Heart left ventricle (tissue), 16 donors: ENCODE measurements at regions of chr9 and their contacts with region 1.

Region 1: DNA sequence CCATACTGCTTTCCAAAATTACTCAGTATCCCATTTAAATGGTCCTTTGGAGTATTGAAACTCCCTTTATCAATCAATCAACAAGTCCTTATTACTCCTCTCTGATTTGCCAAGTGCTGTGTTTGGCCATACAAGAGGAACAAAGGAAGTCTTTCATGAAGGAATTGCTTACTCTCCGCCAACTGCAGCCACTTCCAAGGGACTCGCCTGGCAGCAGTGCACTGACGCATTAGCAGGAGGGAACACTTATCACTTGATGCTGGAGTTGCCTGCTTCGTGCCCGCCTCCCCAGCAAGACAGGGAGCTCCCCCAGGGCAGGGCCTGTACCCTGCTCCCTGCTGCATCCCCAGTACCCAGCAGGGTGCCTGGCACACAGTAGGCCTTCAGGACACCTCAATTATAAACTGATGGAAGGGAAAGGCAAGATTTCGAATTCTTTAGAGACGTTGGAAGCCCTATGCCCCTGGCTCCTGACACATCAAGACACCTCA is 97.9 kb downstream of the CRB2 start:
- DNase-seq: peak in 3 of 5 donors; percentile 35 to 70 (median 38)
- ATAC-seq: peak; percentile 19 to 77 (median 59)
- H3K4me3 ChIP-seq: no peak overlapping the region
- H3K27ac ChIP-seq: no peak overlapping the region
- H3K4me1 ChIP-seq: no peaks in the 10 kb centered on the region
- H3K27me3 ChIP-seq: no peaks in the 10 kb centered on the region
- CTCF ChIP-seq: no peak
- POLR2A ChIP-seq: no peak

Region 2: GRCh38 chr9:123360161-123361085 is 93.5 kb before region 1 on chr9:
- intact Hi-C with region 1: no loop called
- DNase-seq: no peak
- ATAC-seq: no peak
- H3K4me3 ChIP-seq: no peak overlapping the region
- H3K27ac ChIP-seq: no peak overlapping the region
- H3K4me1 ChIP-seq: no peaks in the 10 kb centered on the region
- H3K27me3 ChIP-seq: peaks cover 0 to 12% (median 0%) of the 10 kb centered on the region in 9 donors
- CTCF ChIP-seq: no peak
- POLR2A ChIP-seq: no peak

Region 3: DNA sequence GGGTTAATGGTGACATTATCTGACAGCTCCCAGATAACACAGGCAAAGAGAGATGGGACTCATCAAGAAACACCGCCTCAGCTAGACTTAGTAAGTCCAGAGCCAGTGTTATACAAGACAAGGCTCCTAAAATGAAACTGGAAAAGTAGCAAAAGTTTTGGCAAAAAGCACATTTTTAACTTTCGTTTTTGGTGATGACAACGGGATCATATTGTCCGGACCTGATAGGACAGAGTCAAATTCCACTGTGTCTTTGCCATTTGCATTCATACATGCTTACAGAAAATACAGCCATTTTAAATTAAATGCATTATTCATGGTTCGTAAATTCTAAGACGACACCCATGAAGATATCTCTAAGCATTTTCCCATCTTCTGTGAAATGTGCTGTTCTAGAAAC is 54.2 kb after region 1 on chr9:
- intact Hi-C with region 1: loop called in 1 of 10 experiments (anchors 10 kb)
- DNase-seq: no peak
- ATAC-seq: peak in 2 of 4 donors; percentile 21 to 28
- H3K4me3 ChIP-seq: peak overlapping the region in 8 of 12 donors; percentile 5 to 43 (median 29)
- H3K27ac ChIP-seq: no peak overlapping the region
- H3K4me1 ChIP-seq: peaks cover 0 to 20% (median 0%) of the 10 kb centered on the region in 12 donors
- H3K27me3 ChIP-seq: no peaks in the 10 kb centered on the region
- CTCF ChIP-seq: no peak
- POLR2A ChIP-seq: no peak

Region 4: DNA sequence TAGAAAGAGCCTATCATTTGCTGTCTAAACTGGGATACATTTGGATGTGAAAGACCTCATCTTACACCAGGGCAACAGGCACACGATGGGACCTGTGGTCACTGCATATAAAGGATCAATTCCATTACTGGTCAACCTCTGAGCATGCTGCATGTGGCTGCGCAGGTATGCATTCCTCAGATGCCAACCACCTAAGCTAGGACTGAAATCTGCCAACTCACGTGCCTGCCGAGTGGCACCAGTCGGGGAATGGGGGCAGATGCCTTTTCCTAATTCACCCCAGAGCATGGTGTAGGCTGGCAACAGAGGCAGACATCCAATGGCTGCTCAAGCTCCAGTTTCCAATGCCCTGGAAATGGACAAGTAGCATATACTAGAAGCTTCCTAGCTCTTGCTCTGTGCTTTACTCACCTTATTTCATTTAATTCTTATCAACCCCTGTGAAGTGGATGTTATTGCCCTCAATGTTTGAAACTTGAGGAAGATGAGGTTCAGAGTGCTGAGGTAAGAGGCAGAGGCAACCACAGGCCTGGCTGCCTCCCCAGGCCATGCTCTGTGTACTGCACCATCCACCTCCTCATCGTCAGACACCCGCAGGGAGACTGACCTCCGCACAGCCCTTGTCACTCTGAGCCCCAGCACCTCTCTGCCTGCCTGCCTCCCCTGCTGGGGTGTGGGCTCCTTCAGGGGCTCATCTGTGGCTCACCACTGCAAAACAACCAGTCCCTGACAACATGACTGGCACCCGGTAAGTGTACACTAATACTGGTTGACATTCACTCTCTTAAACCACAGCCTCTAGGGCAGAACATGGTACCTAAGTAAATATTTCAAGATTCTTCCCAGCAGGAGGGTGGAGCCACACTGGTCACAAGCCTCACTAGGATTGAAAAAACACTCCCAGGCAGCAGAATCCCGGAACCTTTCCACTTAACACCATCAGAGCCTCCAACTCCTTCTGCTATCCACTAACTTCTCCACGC is 130.6 kb after region 1 on chr9:
- intact Hi-C with region 1: no loop called
- DNase-seq: no peak
- ATAC-seq: no peak
- H3K4me3 ChIP-seq: no peak overlapping the region
- H3K27ac ChIP-seq: no peak overlapping the region
- H3K4me1 ChIP-seq: no peaks in the 10 kb centered on the region
- H3K27me3 ChIP-seq: no peaks in the 10 kb centered on the region
- CTCF ChIP-seq: no peak
- POLR2A ChIP-seq: no peak